Caco-2 (cell line): ENCODE measurements at regions of chr1 and their contacts with region 1.

Region 1: DNA sequence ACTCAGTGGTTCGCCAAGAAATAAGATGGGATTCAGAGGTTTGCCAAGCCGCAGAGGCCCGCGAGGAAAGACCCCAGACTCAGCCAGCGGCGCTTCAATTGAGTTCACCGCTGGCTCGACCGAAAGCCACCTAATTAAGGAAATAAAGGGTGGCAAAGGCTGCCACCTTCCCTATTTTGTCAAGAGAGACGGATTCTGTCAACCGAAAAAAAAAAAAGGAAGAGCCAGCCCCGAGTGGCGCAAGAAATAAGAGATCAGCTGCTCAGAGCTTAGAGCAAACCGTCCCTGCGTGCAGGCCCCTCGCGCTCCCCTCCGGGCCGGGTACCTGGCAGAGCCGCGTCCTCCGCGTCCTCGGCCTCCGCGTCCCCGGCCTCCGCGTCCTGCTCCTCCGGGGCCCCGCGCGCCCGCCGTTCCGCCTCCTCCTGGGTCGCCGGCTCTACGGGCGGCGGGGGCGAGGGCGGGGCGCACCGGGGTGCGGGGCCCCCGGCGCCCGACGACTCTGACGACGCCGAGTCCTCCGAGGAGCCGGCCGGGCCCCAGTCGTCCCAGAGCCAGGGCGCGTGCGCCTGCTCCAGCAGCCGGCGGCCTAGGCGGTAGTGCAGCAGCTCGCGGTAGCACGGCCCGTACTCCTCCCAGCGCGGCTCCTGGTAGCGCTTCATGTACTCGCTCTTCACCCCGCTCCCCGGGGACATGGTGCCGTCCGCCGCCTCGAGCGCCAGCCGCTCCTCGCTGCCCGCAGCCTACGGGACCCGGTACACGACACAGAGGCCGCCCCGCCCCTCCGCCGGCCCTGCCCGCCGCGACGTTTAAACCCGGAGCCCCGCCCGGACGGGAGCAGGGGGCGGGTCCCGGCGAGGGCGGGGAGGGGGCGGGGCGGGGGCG is 832 bp downstream of the CCSAP start:
- DNase-seq: peak; percentile 89 to 91
- H3K4me3 ChIP-seq: peak overlapping the region; percentile 99
- H3K4me3 Mint-ChIP-seq: peak overlapping the region; percentile 88
- H3K27ac Mint-ChIP-seq: peak overlapping the region; percentile 80
- H3K4me1 ChIP-seq: peaks cover 19% of the 10 kb centered on the region; the same call in 1 of the 2 replicates
- H3K4me1 Mint-ChIP-seq: peaks cover 16% of the 10 kb centered on the region
- H3K27me3 ChIP-seq: no peaks in the 10 kb centered on the region
- H3K27me3 Mint-ChIP-seq: no peaks in the 10 kb centered on the region
- CTCF ChIP-seq: no peak

Region 2: GRCh38 chr1:229270547-229271447 is 71.2 kb before region 1 on chr1 and contains the start of gene RAB4A:
- CTCF ChIA-PET with region 1: no interaction called
- POLR2A ChIA-PET with region 1: interaction called, 4 read pairs
- intact Hi-C with region 1: loop called (anchors 1 kb)
- DNase-seq: peak; percentile 92 to 96
- H3K4me3 ChIP-seq: peak within 1 kb of the TSS; percentile 77
- H3K4me3 Mint-ChIP-seq: peak within 1 kb of the TSS; percentile 88
- H3K27ac Mint-ChIP-seq: peak within 1 kb of the TSS; percentile 92
- H3K4me1 ChIP-seq: peaks cover 31% of the 10 kb centered on the region
- H3K4me1 Mint-ChIP-seq: peaks cover 17% of the 10 kb centered on the region
- H3K27me3 ChIP-seq: no peaks in the 10 kb centered on the region
- H3K27me3 Mint-ChIP-seq: no peaks in the 10 kb centered on the region
- CTCF ChIP-seq: no peak
- total RNA-seq, gene RAB4A: 98.9 and 111 TPM in 2 replicates

Region 3: DNA sequence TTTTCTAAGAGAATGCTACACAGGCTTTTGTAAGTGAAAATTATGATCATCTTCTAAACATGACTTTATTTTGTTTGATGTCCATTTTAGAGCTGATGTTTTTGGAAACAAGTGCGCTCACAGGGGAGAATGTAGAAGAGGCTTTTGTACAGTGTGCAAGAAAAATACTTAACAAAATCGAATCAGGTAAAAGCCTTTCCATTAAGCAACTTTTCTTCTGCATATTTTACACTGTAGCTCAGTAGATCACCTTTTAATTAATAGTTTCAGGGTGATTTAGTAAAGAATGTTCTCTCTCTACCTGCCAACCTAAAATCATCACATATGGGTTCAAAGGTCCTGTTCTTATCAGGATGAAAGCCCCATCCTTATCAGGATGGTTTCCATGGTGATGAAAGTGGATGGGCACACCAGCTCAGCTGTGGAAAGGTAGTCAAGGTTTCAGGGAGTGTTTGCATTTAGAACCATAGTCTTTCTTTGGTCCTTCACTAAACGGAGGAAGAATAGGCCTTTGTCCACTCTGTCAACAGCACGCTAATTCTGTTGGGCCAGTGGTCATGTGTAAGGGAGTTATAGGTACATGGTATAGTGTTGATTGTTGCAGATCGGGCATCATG is 43.0 kb before region 1 on chr1:
- CTCF ChIA-PET with region 1: no interaction called
- POLR2A ChIA-PET with region 1: no interaction called
- intact Hi-C with region 1: loop called (anchors 2 kb)
- DNase-seq: peak; percentile 84 to 88
- H3K4me3 ChIP-seq: no peak overlapping the region
- H3K4me3 Mint-ChIP-seq: peak overlapping the region; percentile 39
- H3K27ac Mint-ChIP-seq: peak overlapping the region; percentile 90
- H3K4me1 ChIP-seq: peaks cover 49% of the 10 kb centered on the region
- H3K4me1 Mint-ChIP-seq: peaks cover 34% of the 10 kb centered on the region
- H3K27me3 ChIP-seq: no peaks in the 10 kb centered on the region
- H3K27me3 Mint-ChIP-seq: no peaks in the 10 kb centered on the region
- CTCF ChIP-seq: no peak

Region 4: DNA sequence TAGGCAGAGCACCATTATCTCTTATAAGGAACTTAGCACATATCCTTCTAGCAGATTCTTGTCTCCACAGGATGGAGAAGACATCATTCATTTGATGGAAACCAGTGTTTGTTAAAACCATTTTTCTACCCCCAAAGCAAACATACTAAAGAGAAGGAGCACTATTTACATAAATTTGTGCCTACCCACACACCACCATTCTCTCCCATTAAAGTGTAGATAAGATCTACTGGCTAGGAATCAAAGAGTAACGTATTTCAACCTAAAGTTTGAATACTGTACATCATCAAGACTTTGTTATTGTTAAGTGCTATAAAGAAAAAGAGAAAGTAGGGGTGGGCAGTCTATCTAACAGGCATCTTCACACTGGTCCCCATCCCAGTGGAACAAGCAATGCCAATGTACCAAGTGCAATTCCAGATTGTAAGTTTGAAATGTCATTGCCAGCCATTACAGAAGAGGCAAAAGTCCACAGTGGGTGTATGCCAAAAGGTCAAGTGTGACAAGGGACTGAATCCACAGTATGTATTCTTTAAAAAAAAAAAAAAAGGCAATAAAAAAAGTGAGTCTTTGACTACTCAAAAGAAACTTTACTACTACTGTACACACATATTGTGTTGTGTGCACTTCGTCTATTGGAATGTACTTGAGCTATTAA is 18.0 kb before region 1 on chr1:
- CTCF ChIA-PET with region 1: no interaction called
- POLR2A ChIA-PET with region 1: no interaction called
- intact Hi-C with region 1: no loop called
- DNase-seq: no peak
- H3K4me3 ChIP-seq: no peak overlapping the region
- H3K4me3 Mint-ChIP-seq: no peak overlapping the region
- H3K27ac Mint-ChIP-seq: no peak overlapping the region
- H3K4me1 ChIP-seq: no peaks in the 10 kb centered on the region
- H3K4me1 Mint-ChIP-seq: no peaks in the 10 kb centered on the region
- H3K27me3 ChIP-seq: no peaks in the 10 kb centered on the region
- H3K27me3 Mint-ChIP-seq: no peaks in the 10 kb centered on the region
- CTCF ChIP-seq: no peak

Region 5: GRCh38 chr1:229368347-229368746 is 26.3 kb after region 1 on chr1:
- CTCF ChIA-PET with region 1: no interaction called
- POLR2A ChIA-PET with region 1: no interaction called
- intact Hi-C with region 1: no loop called
- DNase-seq: no peak
- H3K4me3 ChIP-seq: no peak overlapping the region
- H3K4me3 Mint-ChIP-seq: no peak overlapping the region
- H3K27ac Mint-ChIP-seq: no peak overlapping the region
- H3K4me1 ChIP-seq: no peaks in the 10 kb centered on the region
- H3K4me1 Mint-ChIP-seq: no peaks in the 10 kb centered on the region
- H3K27me3 ChIP-seq: no peaks in the 10 kb centered on the region; the same call in 1 of the 2 replicates
- H3K27me3 Mint-ChIP-seq: peaks cover 14% of the 10 kb centered on the region
- CTCF ChIP-seq: no peak

Region 6: GRCh38 chr1:229482511-229482910 is 140.5 kb after region 1 on chr1:
- CTCF ChIA-PET with region 1: interaction called, 10 read pairs
- POLR2A ChIA-PET with region 1: no interaction called
- intact Hi-C with region 1: no loop called
- DNase-seq: no peak
- H3K4me3 ChIP-seq: no peak overlapping the region
- H3K4me3 Mint-ChIP-seq: no peak overlapping the region
- H3K27ac Mint-ChIP-seq: no peak overlapping the region
- H3K4me1 ChIP-seq: no peaks in the 10 kb centered on the region
- H3K4me1 Mint-ChIP-seq: peaks cover 7% of the 10 kb centered on the region
- H3K27me3 ChIP-seq: no peaks in the 10 kb centered on the region
- H3K27me3 Mint-ChIP-seq: no peaks in the 10 kb centered on the region
- CTCF ChIP-seq: no peak